ENCODE measurements at regions of chrX and their contacts with region 1.

Region 1: DNA sequence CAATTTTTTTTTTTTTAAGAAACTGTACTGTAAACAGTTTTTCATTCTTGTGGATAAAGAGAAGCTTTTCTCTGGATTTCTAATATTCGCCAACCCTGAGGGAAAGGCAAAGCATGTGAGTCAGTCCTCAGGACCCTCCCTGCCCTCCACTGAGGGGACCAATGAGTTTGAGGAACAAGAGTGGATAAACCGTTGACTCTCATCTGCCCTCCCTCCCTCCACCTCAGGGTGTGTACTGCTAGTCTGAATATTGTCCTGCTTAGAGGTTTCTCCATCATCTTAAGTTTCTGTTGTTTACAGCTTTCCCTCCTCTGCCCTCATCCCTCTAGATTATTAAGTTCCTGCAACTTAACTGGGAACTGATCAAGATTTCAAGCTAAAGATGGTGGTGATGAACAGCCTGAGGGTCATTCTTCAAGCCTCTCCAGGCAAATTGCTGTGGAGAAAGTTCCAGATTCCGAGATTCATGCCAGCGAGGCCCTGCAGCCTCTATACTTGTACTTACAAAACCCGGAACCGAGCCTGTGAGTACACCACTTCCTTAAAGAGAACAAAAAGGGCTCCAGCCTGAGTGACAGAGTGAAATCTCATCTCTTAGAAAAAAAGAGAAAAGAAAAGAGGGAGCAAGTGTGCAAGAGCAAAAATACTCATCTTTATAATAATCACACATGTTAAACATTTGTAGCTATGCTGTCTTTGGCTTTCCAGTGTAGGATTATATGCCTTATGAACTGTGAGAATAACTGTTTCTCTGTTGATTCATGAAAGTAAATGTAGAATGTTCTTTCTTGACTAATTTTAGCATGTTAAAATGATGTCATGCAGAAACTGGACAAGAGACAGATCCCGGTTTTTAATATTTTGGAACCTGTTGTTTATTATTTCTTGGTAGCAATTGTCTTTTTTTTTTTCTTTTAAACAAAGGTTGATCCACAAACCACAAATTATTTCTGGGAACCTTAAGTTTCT is 11.9 kb downstream of the CA5B start:
- DNase-seq: no peak
- ATAC-seq: peak; percentile 78
- H3K4me3 Mint-ChIP-seq: peak overlapping the region; percentile 58
- H3K27ac Mint-ChIP-seq: peak overlapping the region; percentile 98
- H3K4me1 Mint-ChIP-seq: peaks cover 58% of the 10 kb centered on the region
- H3K27me3 Mint-ChIP-seq: no peaks in the 10 kb centered on the region
- CTCF ChIP-seq: no peak

Region 2: GRCh38 chrX:15448010-15448640 is 301.8 kb before region 1 on chrX:
- CTCF ChIA-PET with region 1: no interaction called
- POLR2A ChIA-PET with region 1: no interaction called
- intact Hi-C with region 1: no loop called
- DNase-seq: no peak
- ATAC-seq: no peak
- H3K4me3 Mint-ChIP-seq: no peak overlapping the region
- H3K27ac Mint-ChIP-seq: no peak overlapping the region
- H3K4me1 Mint-ChIP-seq: no peaks in the 10 kb centered on the region
- H3K27me3 Mint-ChIP-seq: no peaks in the 10 kb centered on the region
- CTCF ChIP-seq: no peak

Region 3: DNA sequence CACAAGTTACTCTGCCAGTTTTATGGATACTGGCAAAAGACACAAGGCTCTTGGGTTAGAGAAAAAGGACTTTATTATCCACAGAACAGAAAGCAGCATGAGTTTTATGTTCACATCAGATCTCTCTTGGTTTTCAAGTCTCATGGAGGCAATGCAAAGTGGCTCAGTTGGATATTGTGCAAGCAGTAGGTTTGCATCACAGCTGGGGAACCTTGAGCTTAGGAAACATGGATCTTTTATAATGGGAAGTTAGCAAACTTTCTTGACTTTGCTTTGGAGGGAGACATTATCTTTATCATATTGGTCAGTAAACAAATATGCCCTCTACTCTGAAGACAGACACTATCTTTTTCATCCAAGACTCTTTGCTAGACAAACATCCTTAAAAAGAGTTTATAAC is 264.3 kb after region 1 on chrX:
- CTCF ChIA-PET with region 1: no interaction called
- POLR2A ChIA-PET with region 1: interaction called, 13 read pairs
- intact Hi-C with region 1: no loop called
- DNase-seq: no peak
- ATAC-seq: no peak
- H3K4me3 Mint-ChIP-seq: no peak overlapping the region
- H3K27ac Mint-ChIP-seq: no peak overlapping the region
- H3K4me1 Mint-ChIP-seq: no peaks in the 10 kb centered on the region
- H3K27me3 Mint-ChIP-seq: no peaks in the 10 kb centered on the region
- CTCF ChIP-seq: no peak

Measured in activated B cell treated with CpG ODN at 0.5 μM for 24 hours (primary cell).